CD8-positive, alpha-beta T cell (primary cell): ENCODE measurements at regions of chr2 and their contacts with region 1.

Region 1: DNA sequence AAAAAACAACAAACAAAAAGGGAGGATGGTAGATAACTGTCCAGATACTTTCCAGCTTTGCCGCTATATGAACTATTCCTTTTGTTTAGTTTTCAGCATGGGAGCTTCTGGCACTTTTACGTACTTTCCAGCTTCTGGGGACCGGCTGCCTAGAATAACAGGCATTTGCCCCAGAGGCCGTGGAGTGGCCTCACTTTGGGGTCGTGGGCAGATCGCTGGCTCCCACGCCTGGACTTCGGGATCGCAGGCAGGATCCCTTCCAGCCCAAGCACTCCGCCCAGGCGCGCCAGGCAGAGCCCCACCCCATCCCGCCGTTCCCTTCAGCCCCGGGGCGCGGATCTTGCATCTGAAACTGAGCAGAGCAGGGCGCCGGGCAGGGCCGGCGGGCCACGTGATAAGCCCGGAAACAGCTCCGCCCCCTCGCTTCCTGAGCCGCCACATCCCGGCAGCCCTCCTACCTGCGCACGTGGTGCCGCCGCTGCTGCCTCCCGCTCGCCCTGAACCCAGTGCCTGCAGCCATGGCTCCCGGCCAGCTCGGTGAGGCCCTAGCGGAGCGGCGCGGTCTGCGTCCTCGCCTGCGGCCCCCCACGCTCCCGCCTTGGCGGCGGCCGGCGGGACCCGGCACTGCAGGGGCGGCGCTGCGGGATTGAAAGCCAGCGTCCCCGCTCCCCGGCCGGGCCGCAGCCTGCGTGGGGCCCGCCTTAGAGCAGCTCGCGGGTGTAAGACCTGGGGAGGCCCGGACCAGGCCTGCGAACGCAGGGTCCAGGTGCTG is at the start of gene ATIC:
- DNase-seq: peak; percentile 75 to 93 (median 88)
- ATAC-seq: peak; percentile 93
- H3K4me3 ChIP-seq: peak within 1 kb of the TSS; percentile 91 to 99
- H3K4me3 Mint-ChIP-seq: peak within 1 kb of the TSS; percentile 95
- H3K27ac ChIP-seq: peak within 1 kb of the TSS; percentile 73 to 86
- H3K27ac Mint-ChIP-seq: peak within 1 kb of the TSS; percentile 92
- H3K4me1 ChIP-seq: peaks cover 13% of the 10 kb centered on the region
- H3K4me1 Mint-ChIP-seq: peaks cover 39% of the 10 kb centered on the region
- H3K27me3 ChIP-seq: no peaks in the 10 kb centered on the region
- H3K27me3 Mint-ChIP-seq: no peaks in the 10 kb centered on the region
- CTCF ChIP-seq: no peak
- total RNA-seq, gene ATIC: 37.9 to 39.3 TPM

Region 2: GRCh38 chr2:215269397-215270119 is 42.3 kb before region 1 on chr2:
- CTCF ChIA-PET with region 1: interaction called, 3 read pairs
- POLR2A ChIA-PET with region 1: no interaction called
- intact Hi-C with region 1: loop called in 1 of 2 experiments (anchors 2 kb)
- DNase-seq: peak; percentile 5 to 78 (median 58)
- ATAC-seq: peak; percentile 38
- H3K4me3 ChIP-seq: no peak overlapping the region
- H3K4me3 Mint-ChIP-seq: no peak overlapping the region
- H3K27ac ChIP-seq: no peak overlapping the region
- H3K27ac Mint-ChIP-seq: no peak overlapping the region
- H3K4me1 ChIP-seq: no peaks in the 10 kb centered on the region
- H3K4me1 Mint-ChIP-seq: no peaks in the 10 kb centered on the region
- H3K27me3 ChIP-seq: no peaks in the 10 kb centered on the region
- H3K27me3 Mint-ChIP-seq: no peaks in the 10 kb centered on the region
- CTCF ChIP-seq: peak; percentile 91

Region 3: GRCh38 chr2:215280326-215280725 is 31.5 kb before region 1 on chr2:
- CTCF ChIA-PET with region 1: no interaction called
- POLR2A ChIA-PET with region 1: no interaction called
- intact Hi-C with region 1: no loop called
- DNase-seq: no peak
- ATAC-seq: no peak
- H3K4me3 ChIP-seq: no peak overlapping the region
- H3K4me3 Mint-ChIP-seq: no peak overlapping the region
- H3K27ac ChIP-seq: no peak overlapping the region
- H3K27ac Mint-ChIP-seq: no peak overlapping the region
- H3K4me1 ChIP-seq: no peaks in the 10 kb centered on the region
- H3K4me1 Mint-ChIP-seq: no peaks in the 10 kb centered on the region
- H3K27me3 ChIP-seq: no peaks in the 10 kb centered on the region
- H3K27me3 Mint-ChIP-seq: peaks cover 3% of the 10 kb centered on the region
- CTCF ChIP-seq: no peak

Region 4: GRCh38 chr2:215598376-215598975 is 286.7 kb after region 1 on chr2:
- CTCF ChIA-PET with region 1: no interaction called
- POLR2A ChIA-PET with region 1: no interaction called
- intact Hi-C with region 1: no loop called
- DNase-seq: no peak
- ATAC-seq: no peak
- H3K4me3 ChIP-seq: no peak overlapping the region
- H3K4me3 Mint-ChIP-seq: no peak overlapping the region
- H3K27ac ChIP-seq: no peak overlapping the region
- H3K27ac Mint-ChIP-seq: no peak overlapping the region
- H3K4me1 ChIP-seq: no peaks in the 10 kb centered on the region
- H3K4me1 Mint-ChIP-seq: no peaks in the 10 kb centered on the region
- H3K27me3 ChIP-seq: no peaks in the 10 kb centered on the region
- H3K27me3 Mint-ChIP-seq: no peaks in the 10 kb centered on the region
- CTCF ChIP-seq: no peak

Region 5: GRCh38 chr2:216081487-216082116 is 769.8 kb after region 1 on chr2 and contains the starts of genes PECR and TMEM169:
- CTCF ChIA-PET with region 1: no interaction called
- POLR2A ChIA-PET with region 1: no interaction called
- intact Hi-C with region 1: loop called in 1 of 2 experiments (anchors 10 kb)
- DNase-seq: peak; percentile 36 to 83 (median 68)
- ATAC-seq: peak; percentile 81
- H3K4me3 ChIP-seq: peak within 1 kb of the TSS; percentile 90 to 91
- H3K4me3 Mint-ChIP-seq: peak within 1 kb of the TSS; percentile 95
- H3K27ac ChIP-seq: peak within 1 kb of the TSS; percentile 55 to 66
- H3K27ac Mint-ChIP-seq: peak within 1 kb of the TSS; percentile 93
- H3K4me1 ChIP-seq: peaks cover 66% of the 10 kb centered on the region
- H3K4me1 Mint-ChIP-seq: peaks cover 65% of the 10 kb centered on the region
- H3K27me3 ChIP-seq: no peaks in the 10 kb centered on the region
- H3K27me3 Mint-ChIP-seq: no peaks in the 10 kb centered on the region
- CTCF ChIP-seq: no peak
- total RNA-seq, gene PECR: 5.9 to 6.4 TPM
- total RNA-seq, gene TMEM169: not detected

Region 6: DNA sequence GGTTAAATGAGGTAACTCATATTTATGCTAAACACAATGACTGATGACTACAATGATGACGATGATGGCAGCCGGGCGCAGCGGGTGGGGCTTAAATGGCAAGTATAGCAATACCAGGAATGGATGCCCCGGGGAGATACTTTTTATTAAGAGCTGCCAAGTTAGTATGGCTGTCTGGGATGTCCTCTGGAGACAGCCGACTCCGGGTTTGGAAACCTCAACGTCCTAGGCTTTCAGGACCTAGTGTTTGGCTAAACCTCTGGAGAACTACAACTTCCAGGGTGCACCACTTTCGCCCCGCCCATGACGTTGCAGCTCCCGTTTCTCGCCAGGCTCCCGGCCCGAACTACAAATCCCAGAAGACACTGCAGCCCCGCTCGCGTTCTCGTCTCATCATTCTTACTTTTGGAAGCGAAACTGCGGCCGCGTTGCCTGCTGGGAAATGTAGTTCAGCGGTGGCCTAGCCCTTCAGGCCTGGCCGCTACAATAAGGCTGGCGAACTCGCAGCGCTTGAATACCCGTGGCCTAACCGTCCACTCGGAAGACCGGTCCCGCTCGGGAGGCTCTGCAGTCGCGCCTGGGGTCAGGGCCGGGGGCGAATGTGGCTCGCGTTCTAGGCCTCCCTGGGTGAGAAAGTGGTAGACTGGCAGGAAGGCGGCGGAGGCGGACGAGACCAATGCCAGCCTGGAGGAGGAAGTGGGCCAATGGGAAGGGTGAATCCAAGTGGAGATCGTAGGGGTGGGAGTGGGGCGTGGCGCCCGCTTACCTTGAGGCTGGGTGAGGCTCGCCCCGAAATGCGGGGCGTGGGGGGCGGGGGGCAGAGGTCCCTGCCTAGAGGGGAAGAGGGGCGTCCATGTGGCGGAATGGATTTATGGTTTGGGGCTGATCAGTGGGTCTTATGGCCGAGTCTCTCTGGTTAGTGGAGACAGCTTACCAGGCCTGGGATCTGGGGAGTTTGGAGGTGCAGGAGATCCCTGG is 1100.5 kb after region 1 on chr2 and contains the start of gene SMARCAL1:
- CTCF ChIA-PET with region 1: no interaction called
- POLR2A ChIA-PET with region 1: interaction called, 3 read pairs
- intact Hi-C with region 1: loop called in 1 of 2 experiments (anchors 10 kb)
- DNase-seq: peak; percentile 95 to 99 (median 98)
- ATAC-seq: peak; percentile 93
- H3K4me3 ChIP-seq: peak within 1 kb of the TSS; percentile 89 to 92
- H3K4me3 Mint-ChIP-seq: peak within 1 kb of the TSS; percentile 95
- H3K27ac ChIP-seq: peak within 1 kb of the TSS; percentile 68 to 90
- H3K27ac Mint-ChIP-seq: peak within 1 kb of the TSS; percentile 95
- H3K4me1 ChIP-seq: no peaks in the 10 kb centered on the region
- H3K4me1 Mint-ChIP-seq: peaks cover 26% of the 10 kb centered on the region
- H3K27me3 ChIP-seq: no peaks in the 10 kb centered on the region
- H3K27me3 Mint-ChIP-seq: no peaks in the 10 kb centered on the region
- CTCF ChIP-seq: no peak
- total RNA-seq, gene SMARCAL1: 4.6 to 5.3 TPM